Mammary epithelial cell (primary cell): ENCODE measurements at regions of chr1 and their contacts with region 1.

Region 1: DNA sequence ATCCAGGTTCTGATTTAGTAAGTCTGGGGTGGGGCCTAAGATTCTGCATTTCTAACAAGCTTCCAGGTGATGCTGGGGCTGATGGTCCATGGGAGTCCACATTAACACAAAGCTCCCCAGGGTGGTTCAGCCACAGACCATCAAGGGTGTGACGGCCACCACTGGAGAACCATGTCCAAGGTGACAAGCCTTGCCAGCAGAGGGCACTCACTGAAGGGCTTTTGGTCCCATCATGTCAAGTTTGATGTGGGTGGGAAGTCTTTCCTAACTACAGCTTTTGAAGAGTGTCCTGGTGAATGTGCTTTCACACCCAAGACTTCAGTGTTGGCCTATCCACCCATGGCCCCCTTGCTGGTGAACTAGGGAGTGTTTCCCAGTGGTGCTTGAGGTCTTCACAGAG is 67.1 kb downstream of the UBE2T start:
- DNase-seq: no peak
- H3K4me3 ChIP-seq: no peak overlapping the region
- H3K27ac ChIP-seq: no peak overlapping the region
- H3K4me1 ChIP-seq: no peaks in the 10 kb centered on the region
- H3K27me3 ChIP-seq: peaks cover 3% of the 10 kb centered on the region
- CTCF ChIP-seq: peak; percentile 48 to 72

Region 2: GRCh38 chr1:202192770-202193613 is 81.6 kb before region 1 on chr1:
- CTCF ChIA-PET with region 1: no interaction called
- dilution Hi-C with region 1: no loop called
- in situ Hi-C with region 1: no loop called
- intact Hi-C with region 1: loop called (anchors 2 kb)
- DNase-seq: no peak
- H3K4me3 ChIP-seq: no peak overlapping the region
- H3K27ac ChIP-seq: no peak overlapping the region
- H3K4me1 ChIP-seq: no peaks in the 10 kb centered on the region
- H3K27me3 ChIP-seq: peaks cover 17% of the 10 kb centered on the region
- CTCF ChIP-seq: peak; percentile 73 to 89

Region 3: DNA sequence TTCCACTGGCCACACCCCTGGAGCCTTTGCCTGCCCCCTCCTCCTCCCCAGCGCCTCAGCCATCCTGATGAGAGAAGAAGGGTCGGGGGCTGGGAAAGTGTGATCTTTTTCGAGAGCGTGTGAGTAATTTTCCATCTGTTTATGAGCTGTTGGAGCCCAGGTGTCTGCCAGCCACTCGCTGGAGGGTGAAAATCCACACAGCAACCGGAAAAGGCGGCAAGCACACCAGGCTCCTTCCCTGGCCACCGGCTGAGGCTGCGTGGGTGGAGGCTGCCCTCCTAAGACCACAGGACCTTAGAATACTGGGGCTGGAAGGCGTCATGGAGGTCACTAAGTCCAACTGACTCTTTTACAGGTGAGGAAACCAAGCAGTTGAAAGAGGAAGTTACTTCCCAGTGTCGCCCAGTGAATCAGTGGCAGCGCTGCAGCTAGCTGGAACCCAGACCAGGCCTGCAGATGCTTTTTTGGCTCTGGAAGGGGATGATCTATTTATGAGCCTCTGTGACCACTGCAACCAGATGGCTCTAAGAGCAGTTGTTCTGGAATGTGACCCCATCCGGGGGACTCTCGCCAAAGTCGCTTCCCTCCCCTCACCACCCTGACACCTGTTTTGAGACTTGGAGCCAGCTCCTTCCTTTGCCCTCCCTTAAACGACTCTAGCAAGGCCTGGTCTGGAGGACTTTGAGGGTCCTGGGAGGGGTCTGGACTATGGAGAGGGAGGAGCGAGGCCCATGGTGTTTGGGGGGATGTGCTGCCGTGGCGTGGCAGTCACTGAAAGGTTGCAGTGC is 26.5 kb before region 1 on chr1:
- CTCF ChIA-PET with region 1: interaction called, 16 read pairs
- dilution Hi-C with region 1: no loop called
- in situ Hi-C with region 1: no loop called
- intact Hi-C with region 1: no loop called
- DNase-seq: no peak
- H3K4me3 ChIP-seq: no peak overlapping the region
- H3K27ac ChIP-seq: no peak overlapping the region
- H3K4me1 ChIP-seq: no peaks in the 10 kb centered on the region
- H3K27me3 ChIP-seq: peaks cover 3% of the 10 kb centered on the region
- CTCF ChIP-seq: no peak

Region 4: GRCh38 chr1:202315576-202316168 is 41.1 kb after region 1 on chr1:
- CTCF ChIA-PET with region 1: interaction called, 3 read pairs
- dilution Hi-C with region 1: loop called (anchors 5 kb)
- in situ Hi-C with region 1: no loop called
- intact Hi-C with region 1: loop called (anchors 1 kb)
- DNase-seq: peak; percentile 44
- H3K4me3 ChIP-seq: no peak overlapping the region
- H3K27ac ChIP-seq: no peak overlapping the region
- H3K4me1 ChIP-seq: peaks cover 6% of the 10 kb centered on the region
- H3K27me3 ChIP-seq: no peaks in the 10 kb centered on the region
- CTCF ChIP-seq: peak; percentile 99